Dendritic cell treated with granulocyte-macrophage colony-stimulating factor and Interleukin-4, amounts not matched to agents 40 ng/mL and 50 ng/mL, for 4 days (primary cell): ENCODE measurements at regions of chr3 and their contacts with region 1.

Region 1: GRCh38 chr3:39216176-39216790 is 23.9 kb upstream of the XIRP1 start:
- H3K4me3 Mint-ChIP-seq: peak overlapping the region; percentile 10
- H3K27ac Mint-ChIP-seq: peak overlapping the region; percentile 85
- H3K4me1 Mint-ChIP-seq: peaks cover 69% of the 10 kb centered on the region
- H3K27me3 Mint-ChIP-seq: peaks cover 2% of the 10 kb centered on the region

Region 2: GRCh38 chr3:39260957-39261356 is 44.7 kb after region 1 on chr3:
- intact Hi-C with region 1: loop called (anchors 5 kb)
- H3K4me3 Mint-ChIP-seq: no peak overlapping the region
- H3K27ac Mint-ChIP-seq: peak overlapping the region; percentile 65
- H3K4me1 Mint-ChIP-seq: peaks cover 69% of the 10 kb centered on the region
- H3K27me3 Mint-ChIP-seq: peaks cover 7% of the 10 kb centered on the region